ENCODE measurements at regions of chr4 and their contacts with region 1.

Region 1: DNA sequence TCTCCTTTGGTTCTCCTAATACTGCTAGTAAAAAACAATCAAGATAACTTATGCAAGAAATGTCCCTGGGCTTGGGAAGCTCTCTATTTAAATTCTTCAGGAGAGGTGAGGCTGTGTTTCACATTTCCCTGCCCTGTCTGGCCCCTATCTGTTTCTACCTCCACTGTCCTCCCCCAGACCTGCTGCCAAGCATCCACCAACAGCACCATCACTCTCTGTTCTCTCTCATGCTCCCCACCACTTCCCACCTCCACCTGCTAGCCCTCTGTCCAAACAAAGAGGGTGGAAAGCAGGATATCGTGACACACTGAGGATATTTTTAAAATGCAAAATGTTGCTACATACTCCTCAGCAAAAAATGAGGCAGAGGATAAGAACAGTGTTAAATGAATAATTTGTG is 88.4 kb upstream of the NAP1L5 start:
- DNase-seq: no peak
- ATAC-seq: no peak
- H3K4me3 ChIP-seq: no peak overlapping the region
- H3K27ac ChIP-seq: no peak overlapping the region
- H3K4me1 ChIP-seq: no peaks in the 10 kb centered on the region
- H3K27me3 ChIP-seq: no peaks in the 10 kb centered on the region
- CTCF ChIP-seq: no peak

Region 2: DNA sequence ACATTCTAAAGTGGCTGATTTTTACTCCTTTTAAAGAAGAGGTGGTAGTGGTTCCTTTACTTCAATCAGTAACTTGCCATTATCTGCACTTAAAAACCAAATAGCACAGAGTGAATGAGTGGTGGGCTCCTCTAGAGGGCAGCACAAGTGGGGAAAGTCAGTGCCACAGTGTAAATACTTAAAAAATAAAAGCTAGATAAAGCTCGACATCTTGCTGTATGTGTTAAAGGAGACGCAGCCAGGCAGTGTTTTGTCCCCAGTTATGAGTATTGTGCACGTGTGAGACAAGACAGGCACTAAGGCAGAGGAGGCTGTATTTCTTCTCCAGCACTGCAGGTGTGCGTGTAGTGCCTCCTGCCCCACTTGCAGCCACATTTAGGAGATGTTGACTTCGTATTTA is 113.0 kb before region 1 on chr4:
- intact Hi-C with region 1: no loop called
- DNase-seq: no peak
- ATAC-seq: no peak
- H3K4me3 ChIP-seq: no peak overlapping the region
- H3K27ac ChIP-seq: no peak overlapping the region
- H3K4me1 ChIP-seq: no peaks in the 10 kb centered on the region
- H3K27me3 ChIP-seq: no peaks in the 10 kb centered on the region
- CTCF ChIP-seq: peak; percentile 35

Region 3: GRCh38 chr4:88743696-88744095 is 42.3 kb before region 1 on chr4:
- intact Hi-C with region 1: loop called in 1 of 2 experiments (anchors 5 kb)
- DNase-seq: no peak
- ATAC-seq: no peak
- H3K4me3 ChIP-seq: no peak overlapping the region
- H3K27ac ChIP-seq: no peak overlapping the region
- H3K4me1 ChIP-seq: peaks cover 25% of the 10 kb centered on the region
- H3K27me3 ChIP-seq: no peaks in the 10 kb centered on the region
- CTCF ChIP-seq: no peak

Region 4: DNA sequence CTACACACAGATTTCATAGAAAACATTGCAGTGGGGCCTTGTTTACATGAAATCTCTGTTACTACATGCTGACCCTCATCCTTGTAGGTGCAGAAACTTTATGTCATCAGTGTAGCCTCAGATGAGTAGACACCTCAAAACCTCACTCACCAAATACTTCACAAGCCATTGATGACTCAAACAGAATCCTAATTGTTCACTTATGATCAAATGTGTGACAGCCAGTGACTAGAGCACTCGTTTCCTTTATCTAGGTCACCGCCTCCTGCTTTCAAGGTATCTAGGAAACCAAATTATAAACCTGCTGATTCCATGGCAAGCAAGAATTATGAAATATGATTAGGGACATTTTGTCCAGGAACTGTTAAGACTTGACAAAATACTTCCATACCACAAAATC is 777.4 kb after region 1 on chr4:
- intact Hi-C with region 1: no loop called
- DNase-seq: no peak
- ATAC-seq: no peak
- H3K4me3 ChIP-seq: no peak overlapping the region
- H3K27ac ChIP-seq: no peak overlapping the region
- H3K4me1 ChIP-seq: no peaks in the 10 kb centered on the region
- H3K27me3 ChIP-seq: no peaks in the 10 kb centered on the region
- CTCF ChIP-seq: no peak